ENCODE measurements at regions of chr2 and their contacts with region 1.

Region 1: GRCh38 chr2:70301344-70302194 is at the start of gene FAM136A:
- DNase-seq: peak; percentile 90
- ATAC-seq: peak; percentile 92
- H3K4me3 Mint-ChIP-seq: peak within 1 kb of the TSS; percentile 90
- H3K27ac Mint-ChIP-seq: peak within 1 kb of the TSS; percentile 95
- H3K4me1 Mint-ChIP-seq: peaks cover 22% of the 10 kb centered on the region
- H3K27me3 Mint-ChIP-seq: no peaks in the 10 kb centered on the region
- CTCF ChIP-seq: no peak
- total RNA-seq, gene FAM136A: 38.9 and 41.0 TPM in 2 replicates

Region 2: DNA sequence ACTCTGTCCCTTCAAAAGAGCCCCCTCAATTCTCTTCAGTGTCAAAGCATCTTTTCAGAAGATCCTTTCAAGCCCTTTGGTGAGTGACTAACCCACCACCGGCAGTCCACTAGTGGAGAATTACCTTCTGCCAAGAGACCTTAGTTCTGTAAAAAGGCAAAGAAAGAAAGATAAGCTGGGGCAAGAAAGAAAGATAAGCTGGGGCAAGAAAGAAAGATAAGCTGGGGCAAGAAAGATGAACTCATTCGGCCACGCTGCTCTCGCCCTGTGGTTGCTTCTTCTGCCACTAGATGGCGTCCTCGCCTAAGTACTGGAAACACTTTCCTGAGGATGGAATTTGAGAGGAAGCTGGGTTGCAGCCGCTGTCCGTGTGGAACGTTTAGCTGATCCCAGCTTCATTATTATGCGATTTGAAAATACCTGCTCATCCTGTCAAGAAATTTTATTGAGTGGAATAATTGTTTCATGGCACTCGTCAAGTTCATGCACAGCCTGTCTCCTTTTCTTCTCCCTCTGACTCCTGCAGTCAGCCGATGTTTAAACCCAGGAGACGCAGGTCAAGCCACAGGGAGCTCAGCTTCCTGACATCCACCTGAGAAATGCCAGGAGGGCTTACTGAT is 576.9 kb before region 1 on chr2:
- CTCF ChIA-PET with region 1: interaction called, 7 read pairs
- POLR2A ChIA-PET with region 1: no interaction called
- intact Hi-C with region 1: loop called (anchors 10 kb)
- DNase-seq: peak; percentile 74
- ATAC-seq: peak; percentile 75
- H3K4me3 Mint-ChIP-seq: peak overlapping the region; percentile 52
- H3K27ac Mint-ChIP-seq: no peak overlapping the region
- H3K4me1 Mint-ChIP-seq: peaks cover 6% of the 10 kb centered on the region
- H3K27me3 Mint-ChIP-seq: peaks cover 6% of the 10 kb centered on the region
- CTCF ChIP-seq: peak; percentile 84

Region 3: DNA sequence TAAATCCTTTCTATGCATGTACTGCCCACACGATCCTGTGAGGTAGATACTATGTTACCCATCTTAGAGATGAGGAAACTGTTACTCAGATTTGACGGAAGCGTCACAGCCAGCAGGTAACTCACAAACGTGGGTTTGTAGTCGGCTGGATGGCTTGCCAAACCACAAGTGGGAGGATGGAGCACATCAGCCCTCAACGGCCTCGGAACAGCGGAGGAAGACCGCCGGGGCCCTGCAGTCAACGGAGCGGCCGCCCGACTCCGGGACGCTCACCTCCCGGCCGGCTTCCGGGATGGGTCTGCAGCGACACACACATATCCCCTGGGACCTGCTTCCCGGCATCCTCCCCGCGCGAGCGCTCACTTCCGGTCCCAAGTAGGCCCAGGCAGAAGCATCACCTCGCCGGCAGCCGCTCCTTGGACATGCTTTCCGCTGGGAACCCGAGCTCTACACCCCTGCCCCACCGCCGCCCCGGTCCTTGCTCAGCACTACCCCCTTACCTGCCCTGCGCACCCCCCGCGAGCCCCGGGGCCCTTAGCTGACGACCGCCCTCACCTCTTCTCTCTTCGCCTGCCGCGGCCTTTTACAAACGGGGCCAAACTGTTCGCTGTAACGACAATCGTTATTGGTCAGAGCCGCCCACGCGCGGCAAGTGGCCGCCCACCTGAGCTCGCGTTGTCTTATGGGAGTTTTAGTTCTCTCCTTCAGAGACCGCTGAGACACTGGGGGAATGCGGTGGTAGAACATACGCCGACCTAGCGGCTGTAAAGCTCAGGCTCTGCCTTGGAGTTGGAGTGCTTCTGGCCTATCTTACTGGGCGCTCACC is 110.9 kb before region 1 on chr2 and contains the start of gene C2orf42:
- CTCF ChIA-PET with region 1: no interaction called
- POLR2A ChIA-PET with region 1: interaction called, 19 read pairs
- intact Hi-C with region 1: no loop called
- DNase-seq: peak; percentile 93
- ATAC-seq: peak; percentile 86
- H3K4me3 Mint-ChIP-seq: peak within 1 kb of the TSS; percentile 98
- H3K27ac Mint-ChIP-seq: peak within 1 kb of the TSS; percentile 100
- H3K4me1 Mint-ChIP-seq: peaks cover 17% of the 10 kb centered on the region
- H3K27me3 Mint-ChIP-seq: no peaks in the 10 kb centered on the region
- CTCF ChIP-seq: no peak
- total RNA-seq, gene C2orf42: 28.4 and 34.8 TPM in 2 replicates

Region 4: DNA sequence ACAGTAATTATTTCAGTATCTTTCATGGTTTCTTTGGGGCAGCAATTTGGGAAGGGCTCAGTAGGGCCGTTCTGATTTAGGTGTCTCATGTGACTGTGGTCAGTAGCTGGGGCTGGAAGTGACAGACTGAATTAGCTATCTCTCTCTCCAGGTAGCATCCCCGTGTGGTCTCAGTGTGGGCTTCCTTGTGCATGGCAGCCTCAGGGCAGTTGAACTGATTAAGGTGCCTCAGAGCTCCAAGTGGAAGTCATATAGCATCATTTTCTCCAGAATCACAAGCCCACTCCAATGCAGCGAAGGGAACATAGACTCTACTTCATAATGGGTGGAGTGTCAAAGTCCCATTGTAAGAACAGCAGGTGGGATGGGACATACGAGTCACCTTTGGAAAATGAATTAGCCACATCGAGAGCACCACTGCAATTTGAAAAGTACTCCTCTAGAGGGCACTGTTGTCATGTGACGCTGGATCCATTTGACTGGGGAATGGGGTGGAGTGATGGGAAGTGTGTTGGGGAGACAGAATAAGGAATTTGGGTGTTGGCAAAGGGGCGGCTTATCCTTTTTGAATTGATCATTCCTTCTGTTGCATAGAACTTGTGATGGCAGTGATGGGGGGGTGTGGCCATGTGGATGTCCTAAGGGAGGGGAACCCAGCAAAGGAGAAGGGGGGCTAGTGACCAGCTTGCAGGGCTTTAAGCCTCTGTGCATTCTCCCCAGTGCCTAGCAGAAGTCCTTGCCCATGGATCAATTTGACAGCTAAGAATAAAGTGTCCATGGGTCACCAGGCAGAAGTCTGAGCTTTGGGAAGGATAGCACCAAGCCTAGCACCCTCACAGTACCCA is 39.6 kb after region 1 on chr2:
- CTCF ChIA-PET with region 1: interaction called, 6 read pairs
- POLR2A ChIA-PET with region 1: no interaction called
- intact Hi-C with region 1: loop called (anchors 1 kb)
- DNase-seq: no peak
- ATAC-seq: no peak
- H3K4me3 Mint-ChIP-seq: no peak overlapping the region
- H3K27ac Mint-ChIP-seq: no peak overlapping the region
- H3K4me1 Mint-ChIP-seq: no peaks in the 10 kb centered on the region
- H3K27me3 Mint-ChIP-seq: peaks cover 27% of the 10 kb centered on the region
- CTCF ChIP-seq: no peak

Region 5: DNA sequence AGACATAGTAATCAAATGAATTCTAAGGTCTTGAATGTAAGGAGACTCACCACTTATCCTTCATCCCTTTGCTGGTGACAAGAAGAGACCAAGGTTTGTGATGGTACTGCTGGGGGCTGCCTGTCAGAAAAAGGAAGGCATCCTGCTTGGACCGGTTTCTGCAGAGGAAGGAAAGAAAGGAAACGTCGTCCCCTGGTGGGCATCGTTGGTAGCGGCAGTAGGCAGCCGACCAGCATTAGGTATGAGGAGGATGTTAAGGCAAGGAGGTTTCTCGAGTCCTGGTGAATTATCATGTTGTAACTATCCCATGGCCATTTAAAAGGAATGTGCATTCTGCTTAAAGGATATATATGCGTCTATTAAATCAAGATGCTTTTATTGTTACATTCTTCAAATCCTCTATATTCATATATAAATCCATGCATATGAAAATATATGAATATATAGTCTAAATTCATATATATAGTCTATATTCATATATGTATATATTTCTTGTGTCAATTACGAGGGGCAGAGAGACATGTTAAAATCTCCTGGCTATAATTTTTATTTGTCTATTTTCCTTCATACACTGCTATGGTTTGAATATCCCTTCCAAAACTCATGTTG is 346.4 kb after region 1 on chr2:
- CTCF ChIA-PET with region 1: interaction called, 25 read pairs
- POLR2A ChIA-PET with region 1: no interaction called
- intact Hi-C with region 1: loop called (anchors 1 kb)
- DNase-seq: peak; percentile 52
- ATAC-seq: peak; percentile 77
- H3K4me3 Mint-ChIP-seq: no peak overlapping the region
- H3K27ac Mint-ChIP-seq: no peak overlapping the region
- H3K4me1 Mint-ChIP-seq: no peaks in the 10 kb centered on the region
- H3K27me3 Mint-ChIP-seq: peaks cover 26% of the 10 kb centered on the region
- CTCF ChIP-seq: peak; percentile 84

Region 6: DNA sequence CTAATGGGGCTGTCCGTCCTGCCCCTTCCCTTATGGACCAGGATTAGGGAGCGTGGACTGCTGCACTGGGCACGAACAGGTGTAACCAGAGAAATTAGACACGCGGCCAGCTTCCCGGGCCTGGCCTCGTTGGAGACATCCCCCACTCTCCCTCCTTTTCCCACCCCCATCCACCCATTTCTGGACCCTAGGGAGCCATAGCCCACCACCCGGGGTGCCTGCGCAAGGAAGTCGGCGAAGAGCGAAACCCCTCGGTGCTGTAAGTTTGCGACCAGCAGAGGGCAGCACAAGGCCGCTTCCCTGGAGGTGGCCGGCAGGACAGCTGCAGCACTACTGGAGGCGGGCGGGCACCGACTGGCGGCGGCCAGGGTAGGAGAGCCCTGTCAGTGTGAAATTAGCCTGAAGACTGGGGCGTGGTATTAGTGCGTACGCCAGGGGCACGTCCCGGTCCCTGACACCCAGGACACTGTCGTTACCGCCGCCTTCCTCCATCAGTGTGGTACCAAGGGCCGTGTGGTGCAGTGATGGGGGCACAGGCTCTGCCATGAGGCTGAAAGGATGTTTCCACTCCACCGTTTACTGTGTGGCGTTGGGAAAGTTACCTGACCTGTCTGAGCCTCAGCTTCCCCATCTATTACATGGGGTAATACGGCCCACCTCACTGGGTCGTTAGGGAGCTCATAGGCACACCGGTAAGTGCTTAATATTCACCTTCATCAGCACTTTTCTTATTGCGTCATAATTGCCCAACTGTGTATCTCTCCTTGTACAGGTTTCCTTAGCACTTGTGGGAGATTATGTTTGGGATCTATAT is 570.0 kb after region 1 on chr2:
- CTCF ChIA-PET with region 1: interaction called, 11 read pairs
- POLR2A ChIA-PET with region 1: no interaction called
- intact Hi-C with region 1: no loop called
- DNase-seq: peak; percentile 61
- ATAC-seq: peak; percentile 78
- H3K4me3 Mint-ChIP-seq: no peak overlapping the region
- H3K27ac Mint-ChIP-seq: no peak overlapping the region
- H3K4me1 Mint-ChIP-seq: peaks cover 6% of the 10 kb centered on the region
- H3K27me3 Mint-ChIP-seq: peaks cover 51% of the 10 kb centered on the region
- CTCF ChIP-seq: no peak

Measured in activated B cell treated with CpG ODN at 0.5 μM for 24 hours (primary cell).